Activated T-helper 2 cell treated with anti-CD3 and anti-CD28 coated beads, Interferon-gamma antibody, Interleukin-2, Interleukin-4, amounts not matched to agents 10 μg/mL and 5 μg/mL and 100 μg/mL, durations not matched to agents 14 hours and 24 hours and 36 hours (primary cell): ENCODE measurements at regions of chr4 and their contacts with region 1.

Region 1: DNA sequence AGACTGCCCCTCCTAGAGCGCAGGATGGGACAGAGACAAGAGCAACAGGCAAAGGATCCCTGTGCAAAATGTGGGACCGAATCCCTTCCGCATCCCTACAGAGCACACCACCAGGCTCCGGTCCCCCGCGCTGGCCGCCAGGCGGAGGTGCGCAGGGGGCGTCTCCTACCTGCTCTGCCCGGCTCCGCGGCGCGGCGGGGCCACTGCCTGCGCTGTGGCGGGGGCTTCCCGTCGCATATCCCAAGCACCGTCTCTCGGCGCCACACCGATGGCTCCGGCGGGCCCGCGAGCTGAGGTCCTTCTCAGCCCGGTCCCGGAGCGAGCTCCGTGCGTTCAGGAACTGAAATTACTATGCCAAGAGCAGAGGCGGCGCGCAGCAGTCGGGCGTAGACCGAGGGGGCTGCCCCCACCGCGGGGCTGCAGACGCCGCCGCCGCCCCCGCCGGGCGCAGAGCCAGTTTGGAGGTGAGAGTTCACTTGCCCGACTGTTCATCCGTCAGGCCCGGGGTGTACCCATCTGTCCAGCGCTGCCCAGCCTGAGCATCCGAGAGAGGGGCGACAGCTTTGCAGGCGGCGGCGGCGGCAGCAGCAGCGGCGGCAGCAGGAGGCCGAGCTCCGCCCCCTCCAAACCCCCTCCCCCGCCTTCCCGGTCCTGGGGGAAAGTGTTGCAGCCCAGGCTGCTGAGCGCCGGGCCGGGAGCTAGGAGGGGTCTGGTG is at the start of gene GPRIN3:
- DNase-seq: peak; percentile 44
- H3K4me3 Mint-ChIP-seq: peak within 1 kb of the TSS; percentile 97
- H3K27ac Mint-ChIP-seq: peak within 1 kb of the TSS; percentile 87
- H3K4me1 Mint-ChIP-seq: peaks cover 60% of the 10 kb centered on the region
- H3K27me3 Mint-ChIP-seq: no peaks in the 10 kb centered on the region
- total RNA-seq, gene GPRIN3: 10.7 and 11.6 TPM in 2 replicates

Region 2: GRCh38 chr4:88442703-88443191 is 864.9 kb before region 1 on chr4:
- intact Hi-C with region 1: no loop called
- DNase-seq: no peak
- H3K4me3 Mint-ChIP-seq: no peak overlapping the region
- H3K27ac Mint-ChIP-seq: no peak overlapping the region
- H3K4me1 Mint-ChIP-seq: peaks cover 2% of the 10 kb centered on the region
- H3K27me3 Mint-ChIP-seq: no peaks in the 10 kb centered on the region

Region 3: DNA sequence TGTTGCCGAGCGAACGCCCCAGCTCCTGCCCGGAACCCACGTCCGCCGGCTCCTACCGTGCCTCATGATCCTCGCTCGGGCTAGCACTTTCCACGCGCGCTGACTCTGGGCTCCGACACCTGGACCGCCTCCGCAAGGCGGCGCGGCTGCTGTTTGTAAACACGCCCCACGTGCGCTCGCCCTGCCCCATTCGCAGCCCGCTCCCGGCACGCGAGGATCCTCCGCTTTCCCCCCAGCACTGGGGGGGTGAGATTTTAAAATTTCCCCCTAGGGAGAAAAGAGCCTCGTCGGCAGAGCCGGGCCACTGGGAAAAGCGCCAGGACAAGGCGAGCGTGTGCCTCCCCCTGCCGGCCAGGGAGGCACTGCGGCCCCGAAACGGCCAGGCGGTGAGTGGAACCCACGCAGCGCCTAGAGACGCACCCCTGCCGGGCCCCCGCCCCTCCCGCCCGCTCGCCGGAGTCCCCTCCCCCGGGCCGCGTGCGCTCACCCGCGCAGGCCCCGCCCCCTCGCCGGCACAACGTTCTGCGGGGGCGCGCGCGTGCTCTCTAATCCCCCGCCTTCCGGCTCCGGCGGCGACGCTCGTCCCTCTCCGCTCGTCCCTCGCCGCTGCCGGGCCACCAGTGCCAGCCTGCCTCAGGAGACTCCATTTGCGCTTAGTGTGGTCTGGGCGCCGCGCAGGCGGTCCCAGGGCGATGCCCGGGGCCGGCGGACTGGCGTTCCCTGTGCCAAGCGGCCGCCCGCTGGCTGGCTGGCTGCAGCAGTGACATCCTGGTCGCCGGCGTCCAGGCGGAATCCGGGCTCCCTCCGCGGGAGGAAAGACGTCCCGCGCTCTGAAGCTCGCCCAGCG is 196.4 kb before region 1 on chr4 and contains the start of gene TIGD2:
- intact Hi-C with region 1: loop called (anchors 5 kb)
- DNase-seq: peak; percentile 80
- H3K4me3 Mint-ChIP-seq: peak within 1 kb of the TSS; percentile 84
- H3K27ac Mint-ChIP-seq: peak within 1 kb of the TSS; percentile 42
- H3K4me1 Mint-ChIP-seq: peaks cover 17% of the 10 kb centered on the region
- H3K27me3 Mint-ChIP-seq: peaks cover 22% of the 10 kb centered on the region
- total RNA-seq, gene TIGD2: 2.6 and 3.0 TPM in 2 replicates

Region 4: GRCh38 chr4:89254847-89255246 is 52.8 kb before region 1 on chr4:
- intact Hi-C with region 1: loop called (anchors 2 kb)
- DNase-seq: peak; percentile 16
- H3K4me3 Mint-ChIP-seq: no peak overlapping the region
- H3K27ac Mint-ChIP-seq: peak overlapping the region; percentile 39
- H3K4me1 Mint-ChIP-seq: peaks cover 54% of the 10 kb centered on the region
- H3K27me3 Mint-ChIP-seq: no peaks in the 10 kb centered on the region

Region 5: DNA sequence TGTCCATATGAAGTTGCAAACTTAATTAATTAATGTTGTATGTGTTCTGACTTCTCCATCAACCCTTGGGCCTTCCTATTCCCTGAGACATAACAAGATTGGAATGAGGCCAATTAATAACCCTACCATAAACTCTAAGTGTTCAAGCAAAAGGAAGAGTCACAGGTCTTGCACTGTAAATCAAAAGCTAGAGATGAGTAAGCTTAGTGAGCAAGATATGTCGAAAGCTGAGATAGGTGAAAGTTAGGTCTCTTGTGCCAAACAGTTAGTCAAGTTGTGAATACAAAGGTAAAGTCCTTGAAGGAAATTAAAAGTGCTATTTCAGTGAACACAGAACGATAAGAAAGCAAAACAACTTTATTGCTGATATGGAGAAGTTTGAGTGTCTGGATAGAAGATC is 58.2 kb after region 1 on chr4:
- intact Hi-C with region 1: loop called (anchors 5 kb)
- DNase-seq: no peak
- H3K4me3 Mint-ChIP-seq: no peak overlapping the region
- H3K27ac Mint-ChIP-seq: no peak overlapping the region
- H3K4me1 Mint-ChIP-seq: peaks cover 14% of the 10 kb centered on the region
- H3K27me3 Mint-ChIP-seq: peaks cover 1% of the 10 kb centered on the region